CD4-positive, alpha-beta memory T cell (primary cell): ENCODE measurements at regions of chr1 and their contacts with region 1.

Region 1: GRCh38 chr1:159826441-159827101 is at the start of gene SLAMF8:
- DNase-seq: peak; percentile 38 to 53 (median 42)
- H3K4me3 ChIP-seq: peak within 1 kb of the TSS in 1 of 2 donors; percentile 13
- H3K4me3 Mint-ChIP-seq: peak within 1 kb of the TSS in 7 of 8 donors; percentile 54 to 74 (median 64)
- H3K27ac ChIP-seq: no peak within 1 kb of the TSS
- H3K27ac Mint-ChIP-seq: peak within 1 kb of the TSS in 6 of 7 donors; percentile 54 to 85 (median 74)
- H3K4me1 ChIP-seq: peaks cover 42% of the 10 kb centered on the region
- H3K4me1 Mint-ChIP-seq: peaks cover 35 to 56% (median 48%) of the 10 kb centered on the region in 4 donors
- H3K27me3 ChIP-seq: no peaks in the 10 kb centered on the region
- H3K27me3 Mint-ChIP-seq: no peaks in the 10 kb centered on the region
- total RNA-seq, gene SLAMF8: 2.0 TPM

Region 2: GRCh38 chr1:159854693-159855192 is 28.2 kb after region 1 on chr1:
- CTCF ChIA-PET with region 1: interaction called, 5 read pairs
- POLR2A ChIA-PET with region 1: interaction called, 22 read pairs
- intact Hi-C with region 1: no loop called
- DNase-seq: peak; percentile 66 to 75 (median 70)
- H3K4me3 ChIP-seq: peak overlapping the region; percentile 42 to 53
- H3K4me3 Mint-ChIP-seq: peak overlapping the region; percentile 83 to 95 (median 89)
- H3K27ac ChIP-seq: peak overlapping the region; percentile 38
- H3K27ac Mint-ChIP-seq: peak overlapping the region; percentile 33 to 93 (median 84)
- H3K4me1 ChIP-seq: peaks cover 14% of the 10 kb centered on the region
- H3K4me1 Mint-ChIP-seq: peaks cover 9 to 25% (median 14%) of the 10 kb centered on the region in 4 donors
- H3K27me3 ChIP-seq: no peaks in the 10 kb centered on the region
- H3K27me3 Mint-ChIP-seq: no peaks in the 10 kb centered on the region